ENCODE measurements at regions of chr21 and their contacts with region 1.

Region 1: DNA sequence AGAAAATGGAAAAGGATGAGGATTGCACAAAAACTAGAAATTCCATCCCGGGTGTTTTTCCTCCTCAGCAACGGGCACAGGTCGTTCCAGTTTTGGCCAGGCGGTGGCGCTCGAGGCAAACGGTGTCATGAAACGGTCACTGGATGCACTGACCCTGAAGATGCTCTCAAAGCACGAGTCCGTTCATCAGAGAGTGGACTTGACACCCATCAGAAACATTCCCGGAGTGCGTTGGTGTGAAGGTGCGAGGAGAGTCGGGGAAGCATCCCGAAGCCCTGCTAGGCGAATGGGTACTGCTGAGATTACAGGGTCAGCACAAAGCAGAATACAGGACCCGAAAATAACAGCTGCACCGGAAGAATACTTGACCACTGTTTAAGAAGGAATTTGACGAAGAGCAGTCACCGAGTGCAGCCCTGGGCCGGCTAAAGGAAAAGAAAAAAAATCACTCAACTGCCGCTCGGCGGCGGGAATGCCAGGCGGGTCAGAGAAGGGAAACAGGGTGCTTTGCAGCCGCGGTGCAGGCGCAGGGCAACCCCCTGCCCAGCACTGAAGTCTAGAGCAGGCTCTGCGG is 71.7 kb upstream of the ETS2 start:
- DNase-seq: peak; percentile 47 to 71
- ATAC-seq: peak; percentile 74 to 91; a peak in 5 of 6 replicates
- H3K4me3 ChIP-seq: no peak overlapping the region
- H3K27ac ChIP-seq: peak overlapping the region; percentile 61 to 65
- H3K4me1 ChIP-seq: peaks cover 7% of the 10 kb centered on the region; the same call in 2 of the 3 replicates
- CTCF ChIP-seq: peak; percentile 75
- EP300 ChIP-seq: no peak
- POLR2A ChIP-seq: no peak
- RAD21 ChIP-seq: peak; percentile 91 to 93

Region 2: GRCh38 chr21:38755681-38756371 is 21.8 kb after region 1 on chr21:
- CTCF ChIA-PET with region 1: interaction called, 10 read pairs
- POLR2A ChIA-PET with region 1: no interaction called
- DNase-seq: peak in 1 of 2 experiments; percentile 58
- ATAC-seq: peak; percentile 66 to 78
- H3K4me3 ChIP-seq: no peak overlapping the region
- H3K27ac ChIP-seq: peak overlapping the region; percentile 61 to 76
- H3K4me1 ChIP-seq: peaks cover 25% of the 10 kb centered on the region
- CTCF ChIP-seq: no peak
- EP300 ChIP-seq: no peak
- POLR2A ChIP-seq: no peak
- RAD21 ChIP-seq: no peak

Region 3: GRCh38 chr21:38804623-38805327 is 70.7 kb after region 1 on chr21:
- CTCF ChIA-PET with region 1: interaction called, 20 read pairs
- POLR2A ChIA-PET with region 1: interaction called, 3 read pairs
- DNase-seq: peak in 1 of 2 experiments; percentile 69
- ATAC-seq: peak; percentile 69 to 71
- H3K4me3 ChIP-seq: peak overlapping the region; percentile 93
- H3K27ac ChIP-seq: peak overlapping the region; percentile 98 to 99
- H3K4me1 ChIP-seq: peaks cover 63% of the 10 kb centered on the region
- CTCF ChIP-seq: peak; percentile 51
- EP300 ChIP-seq: no peak
- POLR2A ChIP-seq: no peak
- RAD21 ChIP-seq: peak; percentile 44 to 64; a peak in 4 of 5 replicates